ENCODE measurements at regions of chr14 and their contacts with region 1.

Region 1: DNA sequence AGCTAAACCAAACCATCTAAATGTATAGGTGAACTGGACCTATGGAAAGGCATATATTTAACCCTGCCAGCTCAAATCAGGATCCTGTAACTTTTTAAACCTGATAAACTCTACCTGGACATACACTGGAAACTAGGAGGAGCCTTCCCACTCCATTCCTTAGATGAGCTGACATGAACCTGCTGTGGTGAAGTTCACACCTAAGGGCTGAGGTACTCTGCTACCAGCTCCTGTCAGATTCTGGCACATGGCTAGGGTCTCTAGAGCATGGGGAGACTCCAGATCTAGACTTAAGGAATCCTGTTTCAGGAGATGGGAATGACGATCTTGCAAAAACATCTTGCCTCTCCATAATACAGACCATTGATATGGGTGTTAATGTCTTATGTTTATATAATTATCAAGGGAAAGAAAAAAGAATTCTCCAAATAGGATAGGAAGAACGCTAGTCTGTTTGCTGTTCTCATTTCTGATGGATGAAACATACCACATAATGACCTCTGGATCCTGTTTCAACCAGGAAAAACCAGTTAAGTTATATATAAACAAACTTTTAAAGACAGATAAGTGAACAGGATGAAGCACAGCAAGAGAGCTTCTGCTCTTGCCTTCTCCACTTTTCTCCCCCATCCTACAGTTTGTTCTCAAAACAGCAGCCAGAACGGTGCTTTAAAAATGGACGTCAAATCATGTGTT is 27.6 kb downstream of the COQ6 start:
- DNase-seq: no peak
- H3K4me3 Mint-ChIP-seq: no peak overlapping the region
- H3K27ac Mint-ChIP-seq: no peak overlapping the region
- H3K4me1 Mint-ChIP-seq: no peaks in the 10 kb centered on the region
- H3K27me3 Mint-ChIP-seq: no peaks in the 10 kb centered on the region

Region 2: GRCh38 chr14:73795972-73796371 is 181.8 kb before region 1 on chr14:
- CTCF ChIA-PET with region 1: no interaction called
- POLR2A ChIA-PET with region 1: interaction called, 13 read pairs
- DNase-seq: no peak
- H3K4me3 Mint-ChIP-seq: no peak overlapping the region
- H3K27ac Mint-ChIP-seq: no peak overlapping the region
- H3K4me1 Mint-ChIP-seq: no peaks in the 10 kb centered on the region
- H3K27me3 Mint-ChIP-seq: no peaks in the 10 kb centered on the region

Measured in activated CD4-positive, alpha-beta T cell treated with anti-CD3 and anti-CD28 coated beads, Interleukin-2, amount 10 ng/mL, durations not matched to agents 7 days and 5 days (primary cell).